Dendritic cell treated with granulocyte-macrophage colony-stimulating factor and Interleukin-4, amounts not matched to agents 40 ng/mL and 50 ng/mL, for 4 days (primary cell): ENCODE measurements at regions of chr3 and their contacts with region 1.

Region 1: GRCh38 chr3:187919048-187919447 is 173.8 kb upstream of the BCL6 start:
- H3K4me3 Mint-ChIP-seq: no peak overlapping the region
- H3K27ac Mint-ChIP-seq: peak overlapping the region; percentile 61
- H3K4me1 Mint-ChIP-seq: peaks cover 55% of the 10 kb centered on the region
- H3K27me3 Mint-ChIP-seq: peaks cover 3% of the 10 kb centered on the region

Region 2: DNA sequence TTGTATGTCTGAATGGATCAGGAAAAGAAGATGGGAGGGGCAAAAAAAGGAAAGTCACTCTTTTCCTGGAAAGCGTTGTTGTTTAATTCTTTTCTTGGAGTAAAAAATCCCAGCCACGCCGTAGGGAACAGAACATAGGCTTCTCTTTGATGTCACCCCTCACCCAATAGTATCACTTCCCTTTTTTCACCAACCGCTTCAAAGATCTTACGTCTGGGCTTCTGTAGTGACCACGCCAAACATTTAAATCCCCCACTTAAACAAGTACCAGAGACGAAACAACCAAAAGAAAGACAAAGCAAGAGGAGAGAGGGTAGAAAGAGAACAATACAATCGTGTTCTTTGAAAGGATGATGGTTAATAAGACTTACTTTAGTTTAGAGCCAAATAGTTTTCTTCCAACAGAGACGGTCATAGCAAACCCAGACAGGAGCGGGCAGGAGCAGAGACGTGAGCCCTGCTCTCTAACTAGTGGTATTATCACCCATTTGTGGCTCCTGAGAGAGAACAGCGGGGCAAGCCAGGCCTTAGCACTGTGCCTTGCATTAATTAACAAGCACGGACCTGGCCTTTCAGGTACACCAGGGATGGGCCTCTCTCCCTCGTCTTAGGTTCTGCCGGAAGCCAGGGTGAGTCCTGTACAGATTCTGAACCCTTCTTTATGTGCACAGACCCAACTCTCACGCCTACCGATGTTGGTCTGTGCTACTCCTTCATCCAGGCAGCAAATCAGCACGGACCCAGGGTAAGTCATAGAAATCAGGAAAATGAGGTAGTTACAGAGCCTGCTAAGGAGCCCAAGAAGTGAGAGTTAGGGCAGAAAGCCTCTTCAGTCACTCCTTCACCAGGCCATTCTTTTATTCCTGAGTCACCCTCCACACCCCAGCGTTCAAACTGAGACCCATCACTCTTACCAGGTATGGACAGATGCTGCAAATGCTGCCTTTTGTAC is 145.5 kb before region 1 on chr3:
- intact Hi-C with region 1: loop called (anchors 5 kb)
- H3K4me3 Mint-ChIP-seq: peak overlapping the region; percentile 76
- H3K27ac Mint-ChIP-seq: peak overlapping the region; percentile 94
- H3K4me1 Mint-ChIP-seq: peaks cover 65% of the 10 kb centered on the region
- H3K27me3 Mint-ChIP-seq: no peaks in the 10 kb centered on the region

Region 3: GRCh38 chr3:187968883-187969580 is 50.0 kb after region 1 on chr3:
- intact Hi-C with region 1: loop called (anchors 5 kb)
- H3K4me3 Mint-ChIP-seq: no peak overlapping the region
- H3K27ac Mint-ChIP-seq: no peak overlapping the region
- H3K4me1 Mint-ChIP-seq: peaks cover 28% of the 10 kb centered on the region
- H3K27me3 Mint-ChIP-seq: peaks cover 3% of the 10 kb centered on the region